PC-9 (cell line): ENCODE measurements at regions of chr3 and their contacts with region 1.

Region 1: GRCh38 chr3:189937307-189938124 is 183.2 kb downstream of the P3H2 start:
- DNase-seq: peak; percentile 98 to 100
- H3K4me3 ChIP-seq: peak overlapping the region; percentile 10; the same call in 1 of the 2 replicates
- H3K27ac ChIP-seq: peak overlapping the region; percentile 98
- H3K4me1 ChIP-seq: peaks cover 54% of the 10 kb centered on the region
- H3K27me3 ChIP-seq: no peaks in the 10 kb centered on the region
- CTCF ChIP-seq: no peak

Region 2: GRCh38 chr3:189270248-189270832 is 667.2 kb before region 1 on chr3:
- CTCF ChIA-PET with region 1: interaction called, 4 read pairs
- POLR2A ChIA-PET with region 1: no interaction called
- intact Hi-C with region 1: loop called (anchors 2 kb)
- DNase-seq: peak; percentile 83 to 86
- H3K4me3 ChIP-seq: no peak overlapping the region
- H3K27ac ChIP-seq: no peak overlapping the region
- H3K4me1 ChIP-seq: no peaks in the 10 kb centered on the region
- H3K27me3 ChIP-seq: no peaks in the 10 kb centered on the region
- CTCF ChIP-seq: peak; percentile 78

Region 3: GRCh38 chr3:189324538-189325138 is 612.9 kb before region 1 on chr3:
- CTCF ChIA-PET with region 1: no interaction called
- POLR2A ChIA-PET with region 1: no interaction called
- intact Hi-C with region 1: loop called (anchors 1 kb)
- DNase-seq: peak; percentile 92 to 100
- H3K4me3 ChIP-seq: no peak overlapping the region
- H3K27ac ChIP-seq: peak overlapping the region; percentile 89
- H3K4me1 ChIP-seq: peaks cover 40% of the 10 kb centered on the region
- H3K27me3 ChIP-seq: no peaks in the 10 kb centered on the region
- CTCF ChIP-seq: no peak

Region 4: DNA sequence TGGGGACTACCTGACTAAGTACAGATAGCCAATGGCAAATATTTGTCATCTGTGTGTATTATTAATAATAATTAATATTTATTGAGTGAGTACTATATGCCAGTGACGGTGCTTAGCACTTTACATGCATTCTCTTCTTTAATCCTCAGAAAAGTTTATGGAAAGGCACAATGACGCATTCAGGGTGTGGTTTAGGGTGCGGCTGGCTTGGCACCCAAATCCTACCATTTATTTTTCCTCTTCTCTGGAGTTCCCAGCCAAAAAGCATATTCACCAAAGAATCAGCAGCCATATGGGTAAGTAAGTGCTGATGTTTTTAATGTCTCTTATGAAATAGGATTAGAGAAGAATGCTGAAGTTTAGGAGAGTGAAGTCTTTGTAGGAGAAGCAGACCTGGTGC is 446.8 kb before region 1 on chr3:
- CTCF ChIA-PET with region 1: no interaction called
- POLR2A ChIA-PET with region 1: no interaction called
- intact Hi-C with region 1: loop called (anchors 1 kb)
- DNase-seq: peak in 1 of 2 experiments; percentile 24
- H3K4me3 ChIP-seq: no peak overlapping the region
- H3K27ac ChIP-seq: peak overlapping the region; percentile 8; the same call in 1 of the 2 replicates
- H3K4me1 ChIP-seq: peaks cover 12% of the 10 kb centered on the region
- H3K27me3 ChIP-seq: no peaks in the 10 kb centered on the region
- CTCF ChIP-seq: no peak

Region 5: GRCh38 chr3:189573004-189573403 is 364.5 kb before region 1 on chr3:
- CTCF ChIA-PET with region 1: no interaction called
- POLR2A ChIA-PET with region 1: interaction called, 5 read pairs
- intact Hi-C with region 1: loop called (anchors 1 kb)
- DNase-seq: peak; percentile 26 to 39
- H3K4me3 ChIP-seq: no peak overlapping the region
- H3K27ac ChIP-seq: peak overlapping the region; percentile 91
- H3K4me1 ChIP-seq: peaks cover 30% of the 10 kb centered on the region
- H3K27me3 ChIP-seq: no peaks in the 10 kb centered on the region
- CTCF ChIP-seq: no peak

Region 6: GRCh38 chr3:189710620-189711402 is 226.7 kb before region 1 on chr3:
- CTCF ChIA-PET with region 1: no interaction called
- POLR2A ChIA-PET with region 1: no interaction called
- intact Hi-C with region 1: loop called (anchors 2 kb)
- DNase-seq: peak; percentile 65 to 68
- H3K4me3 ChIP-seq: no peak overlapping the region
- H3K27ac ChIP-seq: peak overlapping the region; percentile 16; the same call in 1 of the 2 replicates
- H3K4me1 ChIP-seq: peaks cover 24% of the 10 kb centered on the region
- H3K27me3 ChIP-seq: no peaks in the 10 kb centered on the region
- CTCF ChIP-seq: no peak

Region 7: DNA sequence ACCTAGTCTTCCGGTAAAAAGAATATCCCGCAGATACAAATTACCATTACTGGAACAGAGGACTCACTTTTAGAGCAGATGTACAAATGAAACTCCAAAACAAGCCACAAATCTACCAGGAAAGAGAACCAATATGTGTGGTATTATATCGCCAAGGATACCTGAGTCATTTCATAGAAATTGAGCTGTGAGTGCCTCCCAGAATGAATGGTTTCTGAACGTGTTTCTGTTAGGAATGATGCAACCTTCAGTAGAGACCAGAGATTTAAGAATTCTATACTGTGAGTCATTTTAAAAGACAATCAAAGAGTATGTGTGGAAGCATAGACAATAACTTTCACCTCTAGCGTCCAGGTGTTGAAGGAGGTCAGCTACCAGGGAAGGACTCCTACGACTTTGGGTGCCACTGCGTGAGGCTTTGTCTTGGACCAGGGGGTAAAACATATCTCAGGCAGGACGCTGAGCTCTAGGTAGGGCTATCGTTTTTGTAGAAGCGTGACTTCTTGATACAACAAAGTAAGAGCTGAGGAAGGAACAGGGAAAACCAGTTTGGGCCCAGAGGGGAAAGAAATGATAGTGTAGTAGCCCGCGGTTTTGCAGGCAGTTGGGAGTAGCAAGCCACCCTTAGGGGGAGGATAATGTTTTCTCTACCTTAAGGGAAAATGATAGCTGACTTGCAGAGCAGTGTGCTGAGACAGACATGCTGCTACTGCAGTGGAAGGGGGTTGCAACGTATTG is 95.9 kb before region 1 on chr3:
- CTCF ChIA-PET with region 1: no interaction called
- POLR2A ChIA-PET with region 1: interaction called, 3 read pairs
- intact Hi-C with region 1: loop called (anchors 1 kb)
- DNase-seq: peak; percentile 83 to 97
- H3K4me3 ChIP-seq: peak overlapping the region; percentile 40; the same call in 1 of the 2 replicates
- H3K27ac ChIP-seq: peak overlapping the region; percentile 97
- H3K4me1 ChIP-seq: peaks cover 26% of the 10 kb centered on the region
- H3K27me3 ChIP-seq: no peaks in the 10 kb centered on the region
- CTCF ChIP-seq: no peak

Region 8: DNA sequence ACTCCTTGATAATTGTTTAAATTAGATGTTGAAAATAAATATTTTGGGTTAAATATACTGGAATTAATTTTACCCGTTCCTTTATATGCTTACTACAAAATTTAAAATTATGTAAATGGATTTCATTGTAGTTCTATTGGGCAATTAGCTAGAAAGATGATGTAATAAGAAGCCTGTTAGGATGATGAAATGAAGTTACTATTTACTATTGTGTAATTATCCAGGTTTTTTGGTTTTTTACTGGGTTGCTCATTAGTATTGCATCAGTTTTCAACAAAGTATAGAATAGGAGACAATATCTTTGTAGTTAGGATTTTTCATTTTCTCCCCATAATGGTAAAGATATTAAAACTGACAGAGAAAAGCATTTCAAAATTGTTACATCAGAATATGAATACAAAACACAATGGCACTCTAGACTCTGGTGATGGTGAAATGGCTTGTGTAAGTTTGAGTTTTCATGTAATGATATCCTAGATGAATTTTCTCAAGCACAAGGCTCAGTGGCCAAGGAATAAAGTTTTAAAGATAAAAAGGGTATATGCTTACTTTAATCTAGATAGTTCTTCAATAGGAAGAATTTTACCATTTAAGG is 38.9 kb before region 1 on chr3:
- CTCF ChIA-PET with region 1: no interaction called
- POLR2A ChIA-PET with region 1: no interaction called
- intact Hi-C with region 1: no loop called
- DNase-seq: no peak
- H3K4me3 ChIP-seq: no peak overlapping the region
- H3K27ac ChIP-seq: no peak overlapping the region
- H3K4me1 ChIP-seq: no peaks in the 10 kb centered on the region
- H3K27me3 ChIP-seq: no peaks in the 10 kb centered on the region
- CTCF ChIP-seq: no peak

Region 9: GRCh38 chr3:189995129-189995528 is 57.6 kb after region 1 on chr3:
- CTCF ChIA-PET with region 1: no interaction called
- POLR2A ChIA-PET with region 1: no interaction called
- intact Hi-C with region 1: no loop called
- DNase-seq: no peak
- H3K4me3 ChIP-seq: no peak overlapping the region
- H3K27ac ChIP-seq: no peak overlapping the region
- H3K4me1 ChIP-seq: no peaks in the 10 kb centered on the region
- H3K27me3 ChIP-seq: no peaks in the 10 kb centered on the region
- CTCF ChIP-seq: no peak